ENCODE measurements at regions of chr2 and their contacts with region 1.

Region 1: DNA sequence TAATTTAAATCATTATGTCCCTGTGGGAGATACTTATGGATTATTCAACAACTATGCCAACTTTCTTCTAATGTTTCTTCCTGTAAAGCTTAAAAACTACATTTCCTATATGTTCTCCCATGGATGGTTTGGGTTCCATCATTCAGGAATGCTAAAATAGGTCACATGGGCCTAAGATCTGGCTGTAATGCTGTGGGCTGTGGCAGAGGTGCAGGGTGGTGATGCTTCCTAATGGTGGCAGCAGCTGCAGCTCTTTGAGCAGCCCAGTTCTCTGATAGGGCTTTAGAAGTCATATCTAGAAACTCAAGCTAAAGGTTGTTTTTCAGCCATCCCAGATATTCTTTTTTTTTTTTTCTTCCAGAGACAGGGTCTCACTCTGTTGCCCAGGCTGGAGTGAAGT is 266.1 kb downstream of the ZNF385B start:
- DNase-seq: no peak
- ATAC-seq: peak in 5 of 8 donors; percentile 61 to 81 (median 73)
- H3K4me3 ChIP-seq: no peak overlapping the region
- H3K27ac ChIP-seq: no peak overlapping the region
- H3K4me1 ChIP-seq: peaks cover 0 to 6% (median 0%) of the 10 kb centered on the region in 9 donors
- H3K27me3 ChIP-seq: no peaks in the 10 kb centered on the region
- CTCF ChIP-seq: peak in 4 of 9 donors; percentile 15 to 41 (median 22)

Region 2: GRCh38 chr2:179677077-179677688 is 81.9 kb after region 1 on chr2:
- intact Hi-C with region 1: loop called in 1 of 10 experiments (anchors 10 kb)
- DNase-seq: no peak
- ATAC-seq: peak; percentile 75 to 97 (median 88)
- H3K4me3 ChIP-seq: no peak overlapping the region
- H3K27ac ChIP-seq: peak overlapping the region in 9 of 10 donors; percentile 9 to 65 (median 48)
- H3K4me1 ChIP-seq: peaks cover 2 to 26% (median 18%) of the 10 kb centered on the region in 9 donors
- H3K27me3 ChIP-seq: no peaks in the 10 kb centered on the region
- CTCF ChIP-seq: no peak

Measured in heart right ventricle (tissue), 16 donors.